ENCODE measurements at regions of chr2 and their contacts with region 1.

Region 1: DNA sequence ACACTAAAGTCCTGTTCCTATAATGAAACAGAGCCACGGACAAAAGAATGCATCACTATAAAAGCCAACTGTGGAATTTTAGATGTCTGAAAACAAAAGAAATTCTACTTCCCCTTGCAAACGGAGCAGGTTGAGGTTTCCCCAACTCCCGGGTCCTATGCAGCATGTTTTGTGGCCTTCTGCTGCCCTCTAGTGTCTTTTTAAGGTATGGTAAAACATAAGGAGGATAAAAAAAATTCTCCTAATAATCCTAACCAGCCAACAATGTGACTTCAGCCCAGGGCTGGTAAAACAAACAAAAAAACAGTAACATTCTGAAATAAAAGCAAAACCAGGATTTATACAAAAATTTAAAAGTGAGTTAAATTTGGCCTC is 539.5 kb downstream of the NRXN1 start:
- DNase-seq: peak; percentile 36
- ATAC-seq: peak; percentile 84 to 93

Region 2: DNA sequence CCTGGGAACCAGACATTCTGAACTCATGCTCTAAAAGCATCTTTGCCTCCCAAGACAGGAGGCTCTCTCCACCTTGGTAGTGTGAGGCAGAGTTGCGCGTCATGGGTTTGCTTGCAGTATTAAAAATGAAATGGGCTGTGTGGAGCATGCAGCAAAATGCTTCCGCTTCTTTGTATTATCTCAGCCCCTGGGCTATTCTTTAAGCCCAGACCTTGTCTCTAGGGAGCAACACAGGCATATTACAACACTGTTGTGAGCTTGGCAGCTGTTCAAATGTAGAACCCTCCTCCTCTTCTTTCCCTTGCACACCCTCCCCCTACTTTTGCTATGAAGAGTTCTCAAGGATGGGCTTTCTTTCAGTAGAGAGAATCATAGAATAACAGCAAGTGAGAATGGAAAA is 1551.9 kb before region 1 on chr2:
- intact Hi-C with region 1: loop called in 1 of 2 experiments (anchors 5 kb)
- DNase-seq: no peak
- ATAC-seq: peak; percentile 34 to 40